HCT116 (cell line): ENCODE measurements at regions of chr9 and their contacts with region 1.

Region 1: DNA sequence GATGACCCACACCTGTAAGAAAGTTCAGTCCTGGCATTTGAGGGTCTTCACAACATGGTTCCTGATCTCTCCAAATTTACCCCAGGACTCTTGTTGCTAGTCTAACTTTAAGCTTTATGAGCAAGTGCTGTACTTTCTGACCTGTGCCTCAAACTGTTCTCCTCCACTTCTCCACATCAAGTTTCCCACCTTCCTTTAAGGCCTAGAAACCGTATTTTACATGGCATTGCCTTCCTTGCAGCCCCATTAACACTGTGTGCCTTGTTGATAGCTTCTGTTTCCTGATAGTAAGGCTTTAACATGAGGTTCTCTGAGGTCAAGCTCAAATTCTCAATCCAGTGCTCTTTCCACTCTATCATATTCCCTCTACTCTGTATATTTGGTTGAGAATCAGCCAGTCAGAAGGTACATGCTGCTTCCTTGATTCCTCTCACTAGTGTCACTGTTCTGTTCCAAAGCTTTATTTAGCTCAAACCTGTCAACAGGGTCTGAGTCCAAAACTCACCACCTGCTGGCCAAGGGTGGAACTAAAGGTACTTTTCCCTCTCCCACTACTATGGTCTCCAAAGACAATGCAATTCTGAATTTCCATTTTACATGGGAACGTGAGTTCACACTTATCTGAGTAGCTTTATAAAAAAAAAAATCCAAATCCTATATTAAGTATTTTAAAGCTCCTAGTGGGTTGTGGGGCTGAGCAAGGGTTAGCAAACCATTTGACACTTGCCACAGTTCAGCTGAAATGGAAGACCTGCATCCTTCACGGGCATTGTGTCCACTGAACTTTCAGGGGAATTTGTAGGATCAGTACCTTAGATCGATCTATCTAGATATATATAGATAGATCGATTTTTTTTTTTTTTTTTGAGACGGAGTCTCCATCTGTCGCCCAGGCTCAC is 21.1 kb downstream of the VCP start:
- DNase-seq: peak; percentile 27
- ATAC-seq: peak; percentile 80
- H3K4me3 ChIP-seq: no peak overlapping the region
- H3K27ac ChIP-seq: no peak overlapping the region
- H3K4me1 ChIP-seq: no peaks in the 10 kb centered on the region
- H3K27me3 ChIP-seq: no peaks in the 10 kb centered on the region
- CTCF ChIP-seq: peak; percentile 43 to 73 (median 71); a peak in 5 of 6 replicates
- POLR2A ChIP-seq: no peak
- RAD21 ChIP-seq: peak; percentile 47; the same call in 1 of the 2 replicates

Region 2: DNA sequence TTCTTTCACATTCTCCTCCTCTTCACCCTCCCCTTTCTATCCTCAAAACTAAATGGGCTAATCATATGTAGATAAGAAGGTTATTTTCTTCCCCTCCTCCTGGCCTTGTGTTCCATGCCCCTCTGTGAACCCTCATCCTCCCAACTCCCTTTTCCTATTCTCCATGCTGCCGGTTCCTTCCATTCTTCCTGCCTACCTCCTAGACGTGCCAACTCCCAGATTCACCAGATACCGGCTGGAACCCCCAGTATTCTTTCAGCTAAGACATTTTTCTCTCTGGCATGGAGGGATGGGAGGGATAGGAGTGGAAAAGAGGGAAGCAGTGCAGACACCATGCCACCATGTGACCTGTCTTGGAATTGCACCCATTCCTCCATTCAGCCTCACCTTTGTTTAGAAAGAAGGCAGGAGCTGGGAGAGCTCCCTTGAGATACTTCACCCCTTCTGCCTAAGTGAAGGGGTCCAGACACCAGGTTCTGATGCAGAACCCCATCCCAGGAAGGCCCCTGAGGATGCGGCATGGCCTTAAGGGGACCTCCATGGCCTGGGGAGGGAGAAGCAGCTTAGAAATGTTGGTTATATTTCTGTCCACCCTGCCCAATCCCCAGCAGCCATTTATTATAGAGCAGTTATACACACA is 56.9 kb before region 1 on chr9:
- CTCF ChIA-PET with region 1: interaction called, 14 read pairs
- POLR2A ChIA-PET with region 1: interaction called, 3 read pairs
- RAD21 ChIA-PET with region 1: no interaction called
- intact Hi-C with region 1: no loop called
- DNase-seq: peak; percentile 29
- ATAC-seq: peak; percentile 48
- H3K4me3 ChIP-seq: no peak overlapping the region
- H3K27ac ChIP-seq: no peak overlapping the region
- H3K4me1 ChIP-seq: peaks cover 21 to 52% of the 10 kb centered on the region in 2 experiments
- H3K27me3 ChIP-seq: no peaks in the 10 kb centered on the region
- CTCF ChIP-seq: peak in 2 of 3 experiments; percentile 76 to 81; a peak in 4 of 6 replicates
- POLR2A ChIP-seq: no peak
- RAD21 ChIP-seq: no peak

Region 3: GRCh38 chr9:35035851-35036701 is 15.2 kb before region 1 on chr9:
- CTCF ChIA-PET with region 1: interaction called, 10 read pairs
- POLR2A ChIA-PET with region 1: no interaction called
- RAD21 ChIA-PET with region 1: no interaction called
- intact Hi-C with region 1: no loop called
- DNase-seq: no peak
- ATAC-seq: no peak
- H3K4me3 ChIP-seq: no peak overlapping the region
- H3K27ac ChIP-seq: no peak overlapping the region
- H3K4me1 ChIP-seq: no peaks in the 10 kb centered on the region
- H3K27me3 ChIP-seq: no peaks in the 10 kb centered on the region
- CTCF ChIP-seq: no peak
- POLR2A ChIP-seq: no peak
- RAD21 ChIP-seq: no peak

Region 4: GRCh38 chr9:35071814-35072460 is 20.6 kb after region 1 on chr9:
- CTCF ChIA-PET with region 1: interaction called, 13 read pairs
- POLR2A ChIA-PET with region 1: interaction called, 4 read pairs
- RAD21 ChIA-PET with region 1: no interaction called
- intact Hi-C with region 1: no loop called
- DNase-seq: peak; percentile 62
- ATAC-seq: peak; percentile 75
- H3K4me3 ChIP-seq: peak overlapping the region; percentile 92 to 95
- H3K27ac ChIP-seq: peak overlapping the region; percentile 100
- H3K4me1 ChIP-seq: peaks cover 11 to 24% of the 10 kb centered on the region in 2 experiments
- H3K27me3 ChIP-seq: no peaks in the 10 kb centered on the region
- CTCF ChIP-seq: peak in 1 of 3 experiments; percentile 29; a peak in 1 of 6 replicates
- POLR2A ChIP-seq: no peak
- RAD21 ChIP-seq: no peak